PC-9 (cell line): ENCODE measurements at regions of chr10 and their contacts with region 1.

Region 1: GRCh38 chr10:8312781-8313180 is 258.3 kb downstream of the GATA3 start:
- DNase-seq: no peak
- H3K4me3 ChIP-seq: no peak overlapping the region
- H3K27ac ChIP-seq: no peak overlapping the region
- H3K4me1 ChIP-seq: no peaks in the 10 kb centered on the region
- H3K27me3 ChIP-seq: no peaks in the 10 kb centered on the region
- CTCF ChIP-seq: no peak

Region 2: DNA sequence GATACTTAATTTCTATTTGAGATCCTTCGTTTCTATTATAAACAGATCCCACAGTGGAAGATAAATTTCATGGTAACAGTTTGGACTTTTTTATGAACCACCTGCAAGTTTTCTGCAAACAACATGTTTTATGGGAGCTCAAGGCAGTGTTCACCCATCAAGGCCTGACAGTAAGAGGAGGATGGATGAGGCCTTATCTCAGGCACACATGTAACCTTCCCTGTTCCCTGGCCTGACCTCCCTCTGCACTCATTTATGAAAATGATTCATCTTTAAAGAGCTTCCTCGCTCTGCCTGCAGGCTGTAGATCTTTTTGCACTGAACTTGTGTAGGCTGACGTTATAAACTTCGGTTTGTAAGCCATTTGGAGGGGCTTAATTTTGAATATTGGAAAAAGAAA is 241.8 kb after region 1 on chr10:
- CTCF ChIA-PET with region 1: interaction called, 18 read pairs
- POLR2A ChIA-PET with region 1: no interaction called
- intact Hi-C with region 1: no loop called
- DNase-seq: no peak
- H3K4me3 ChIP-seq: no peak overlapping the region
- H3K27ac ChIP-seq: no peak overlapping the region
- H3K4me1 ChIP-seq: no peaks in the 10 kb centered on the region
- H3K27me3 ChIP-seq: no peaks in the 10 kb centered on the region
- CTCF ChIP-seq: no peak